ENCODE measurements at regions of chr1 and their contacts with region 1.

Region 1: DNA sequence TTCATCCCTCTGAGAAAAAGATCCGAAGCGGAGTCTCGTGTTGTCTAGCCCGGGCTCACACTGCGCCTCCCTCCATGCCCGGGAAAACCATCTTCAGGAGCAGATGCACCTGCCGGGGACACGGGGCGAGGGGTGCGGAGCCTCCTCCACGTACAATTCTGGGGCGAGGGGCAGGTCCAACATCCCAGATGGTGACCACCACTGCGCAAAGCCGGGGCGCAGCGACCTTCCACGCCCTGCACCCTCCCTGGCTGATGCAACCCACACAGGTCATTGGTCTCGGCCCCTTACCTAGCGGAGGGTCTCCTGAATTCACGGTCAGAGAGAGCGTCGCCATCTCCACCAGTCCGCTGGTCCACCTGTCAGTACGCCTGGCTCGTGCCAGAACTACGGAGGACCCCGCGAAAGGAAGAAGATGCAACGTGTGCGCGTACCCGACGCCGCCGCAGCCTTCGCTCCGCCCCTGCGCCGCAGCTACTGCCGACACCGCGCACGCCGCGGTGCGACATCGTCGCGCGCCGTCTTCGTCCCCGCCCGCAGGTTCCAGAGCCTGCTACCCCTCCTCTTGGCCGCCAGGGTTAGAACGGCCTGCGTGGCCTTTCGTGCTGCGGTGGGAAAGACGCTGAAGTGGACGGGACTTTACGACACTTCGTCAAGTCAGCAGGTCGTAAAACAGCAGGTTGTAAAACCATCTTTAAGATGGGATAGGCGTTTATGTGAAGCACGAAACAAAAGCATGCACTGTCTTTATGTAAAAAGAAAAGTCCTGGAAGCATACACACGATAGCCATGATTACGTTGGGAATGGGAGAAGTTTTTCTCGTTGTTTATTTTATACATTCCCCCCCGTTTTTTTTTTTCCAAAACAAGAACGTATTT is at the start of gene EPRS1:
- DNase-seq: peak; percentile 88 to 99 (median 93)
- ATAC-seq: peak; percentile 98
- H3K4me3 ChIP-seq: peak within 1 kb of the TSS; percentile 89 to 98
- H3K4me3 Mint-ChIP-seq: peak within 1 kb of the TSS; percentile 95
- H3K27ac ChIP-seq: peak within 1 kb of the TSS; percentile 81 to 84
- H3K27ac Mint-ChIP-seq: peak within 1 kb of the TSS; percentile 94
- H3K4me1 ChIP-seq: peaks cover 27% of the 10 kb centered on the region
- H3K4me1 Mint-ChIP-seq: peaks cover 39% of the 10 kb centered on the region
- H3K27me3 ChIP-seq: no peaks in the 10 kb centered on the region
- H3K27me3 Mint-ChIP-seq: no peaks in the 10 kb centered on the region
- CTCF ChIP-seq: peak; percentile 52
- total RNA-seq, gene EPRS1: 42.8 to 44.2 TPM

Region 2: DNA sequence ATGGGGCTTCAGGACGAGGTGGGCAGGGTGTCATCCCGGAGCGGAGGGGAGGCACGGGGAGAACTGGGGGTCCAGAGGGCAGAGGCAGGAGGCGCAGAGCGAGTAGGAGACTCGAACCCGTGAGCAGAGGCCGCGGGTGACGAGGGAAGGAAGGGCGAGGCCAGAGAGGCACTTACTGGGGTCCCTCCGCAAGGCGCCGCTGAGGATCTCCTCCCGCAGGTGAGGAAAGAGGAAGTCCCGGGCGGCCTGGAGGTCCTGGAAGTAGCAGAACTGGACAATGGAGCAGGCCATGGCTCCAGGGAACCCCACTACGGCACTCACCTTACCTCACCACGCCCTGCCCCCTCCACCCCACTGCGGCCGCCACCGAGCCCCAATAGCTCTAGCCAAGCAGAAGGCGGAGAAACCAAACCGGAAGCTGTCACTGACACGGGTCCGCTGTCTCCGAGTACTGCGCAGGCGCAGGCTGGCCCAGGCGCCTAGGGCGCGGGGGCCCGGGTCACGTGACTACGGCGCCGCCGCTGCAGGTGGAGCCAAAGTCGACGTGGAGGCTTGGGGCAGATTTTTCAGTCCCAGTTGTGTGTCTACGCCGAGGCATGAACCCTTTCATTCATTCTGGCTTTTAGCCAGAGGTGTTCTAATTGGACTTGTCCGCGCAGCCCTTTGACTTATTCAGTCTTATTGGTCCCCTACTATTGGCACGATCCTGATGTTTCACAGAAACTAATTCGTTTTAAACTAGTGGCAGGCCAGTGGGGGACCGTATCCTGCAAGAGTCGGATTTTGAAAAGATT is 226.0 kb after region 1 on chr1 and contains the start of gene RAB3GAP2:
- CTCF ChIA-PET with region 1: no interaction called
- POLR2A ChIA-PET with region 1: no interaction called
- intact Hi-C with region 1: loop called (anchors 1 to 2 kb)
- DNase-seq: peak; percentile 95 to 98 (median 97)
- ATAC-seq: peak; percentile 91
- H3K4me3 ChIP-seq: peak within 1 kb of the TSS; percentile 94 to 98
- H3K4me3 Mint-ChIP-seq: no peak within 1 kb of the TSS
- H3K27ac ChIP-seq: peak within 1 kb of the TSS; percentile 94 to 95
- H3K27ac Mint-ChIP-seq: no peak within 1 kb of the TSS
- H3K4me1 ChIP-seq: peaks cover 29% of the 10 kb centered on the region
- H3K4me1 Mint-ChIP-seq: peaks cover 16% of the 10 kb centered on the region
- H3K27me3 ChIP-seq: no peaks in the 10 kb centered on the region
- H3K27me3 Mint-ChIP-seq: peaks cover 2% of the 10 kb centered on the region
- CTCF ChIP-seq: no peak
- total RNA-seq, gene RAB3GAP2: 34.3 to 34.6 TPM

Measured in CD8-positive, alpha-beta T cell (primary cell).